Activated CD4-positive, alpha-beta T cell treated with anti-CD3 and anti-CD28 coated beads, Interleukin-2, amount 10 ng/mL, durations not matched to agents 7 days and 5 days (primary cell): ENCODE measurements at regions of chr2 and their contacts with region 1.

Region 1: GRCh38 chr2:78237704-78238103 is 715.5 kb upstream of the LRRTM4 start:
- DNase-seq: no peak
- H3K4me3 Mint-ChIP-seq: no peak overlapping the region
- H3K27ac Mint-ChIP-seq: no peak overlapping the region
- H3K4me1 Mint-ChIP-seq: no peaks in the 10 kb centered on the region
- H3K27me3 Mint-ChIP-seq: no peaks in the 10 kb centered on the region

Region 2: DNA sequence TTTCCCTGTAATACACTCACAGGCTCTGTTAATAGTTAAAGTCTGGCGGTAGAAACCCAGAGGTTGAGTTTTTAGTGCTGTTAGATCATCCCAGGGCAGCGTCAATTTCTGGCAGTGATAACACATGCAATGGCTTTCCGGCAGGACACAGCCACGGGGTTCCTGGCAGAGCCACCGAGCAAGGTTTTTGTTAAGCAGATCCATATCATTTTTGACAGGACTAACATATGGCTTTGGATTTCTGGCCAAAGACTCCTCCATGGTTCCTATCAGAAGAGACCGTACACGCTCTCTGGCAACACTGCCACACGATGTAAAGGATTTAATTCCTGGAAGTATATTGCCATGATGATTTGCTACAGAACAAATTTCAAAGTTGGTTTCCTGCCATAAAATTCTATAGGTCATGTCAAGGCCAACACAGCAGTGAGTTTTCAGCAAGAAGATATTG is 1569.9 kb before region 1 on chr2:
- CTCF ChIA-PET with region 1: no interaction called
- POLR2A ChIA-PET with region 1: interaction called, 10 read pairs
- DNase-seq: no peak
- H3K4me3 Mint-ChIP-seq: no peak overlapping the region
- H3K27ac Mint-ChIP-seq: no peak overlapping the region
- H3K4me1 Mint-ChIP-seq: no peaks in the 10 kb centered on the region
- H3K27me3 Mint-ChIP-seq: no peaks in the 10 kb centered on the region